Activated CD8-positive, alpha-beta T cell treated with anti-CD3 and anti-CD28 coated beads, Interleukin-2, amount 10 ng/mL, durations not matched to agents 7 days and 5 days (primary cell): ENCODE measurements at regions of chr1 and their contacts with region 1.

Region 1: GRCh38 chr1:12658531-12659453 is 14.9 kb downstream of the AADACL4 start:
- DNase-seq: peak; percentile 78
- ATAC-seq: peak; percentile 81
- H3K4me3 Mint-ChIP-seq: peak overlapping the region; percentile 47
- H3K27ac Mint-ChIP-seq: peak overlapping the region; percentile 0
- H3K4me1 Mint-ChIP-seq: peaks cover 12% of the 10 kb centered on the region
- H3K27me3 Mint-ChIP-seq: peaks cover 10% of the 10 kb centered on the region

Region 2: GRCh38 chr1:12314333-12314903 is 344.4 kb before region 1 on chr1:
- CTCF ChIA-PET with region 1: interaction called, 89 read pairs
- POLR2A ChIA-PET with region 1: interaction called, 3 read pairs
- DNase-seq: no peak
- ATAC-seq: no peak
- H3K4me3 Mint-ChIP-seq: no peak overlapping the region
- H3K27ac Mint-ChIP-seq: no peak overlapping the region
- H3K4me1 Mint-ChIP-seq: peaks cover 11% of the 10 kb centered on the region
- H3K27me3 Mint-ChIP-seq: no peaks in the 10 kb centered on the region

Region 3: GRCh38 chr1:12344596-12345349 is 314.0 kb before region 1 on chr1:
- CTCF ChIA-PET with region 1: interaction called, 10 read pairs
- POLR2A ChIA-PET with region 1: no interaction called
- DNase-seq: no peak
- ATAC-seq: peak; percentile 21
- H3K4me3 Mint-ChIP-seq: peak overlapping the region; percentile 61
- H3K27ac Mint-ChIP-seq: peak overlapping the region; percentile 91
- H3K4me1 Mint-ChIP-seq: peaks cover 60% of the 10 kb centered on the region
- H3K27me3 Mint-ChIP-seq: no peaks in the 10 kb centered on the region

Region 4: DNA sequence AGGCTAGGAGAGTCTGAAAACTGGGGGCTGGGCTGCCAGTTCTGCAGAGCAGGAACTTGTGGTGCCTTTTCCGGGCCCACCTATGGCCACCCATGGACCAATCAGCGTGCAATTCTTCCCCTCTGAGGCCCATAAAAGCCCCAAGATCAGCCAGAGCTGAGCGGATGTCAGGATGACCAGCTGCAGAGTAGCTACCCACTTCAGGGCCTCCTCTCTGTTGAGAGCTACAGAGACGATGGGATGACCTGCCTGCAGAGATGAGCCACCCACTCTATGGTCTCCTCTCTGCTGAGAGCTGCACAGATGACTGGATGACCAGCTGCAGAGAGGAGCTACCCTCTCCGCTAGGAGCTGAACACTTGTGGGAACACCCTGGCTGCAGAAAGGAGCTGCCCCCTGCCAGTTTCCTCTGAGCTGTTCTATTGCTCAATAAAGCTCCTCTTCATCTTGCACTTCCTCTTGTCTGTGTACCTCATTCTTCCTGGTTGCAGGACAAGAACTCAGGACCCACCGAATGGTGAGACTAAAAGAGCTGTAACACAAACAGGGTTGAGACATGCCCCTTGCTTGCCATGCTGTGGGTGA is 27.8 kb before region 1 on chr1:
- CTCF ChIA-PET with region 1: interaction called, 12 read pairs
- POLR2A ChIA-PET with region 1: interaction called, 3 read pairs
- DNase-seq: no peak
- ATAC-seq: no peak
- H3K4me3 Mint-ChIP-seq: no peak overlapping the region
- H3K27ac Mint-ChIP-seq: no peak overlapping the region
- H3K4me1 Mint-ChIP-seq: peaks cover 29% of the 10 kb centered on the region
- H3K27me3 Mint-ChIP-seq: peaks cover 5% of the 10 kb centered on the region

Region 5: GRCh38 chr1:12669529-12670068 is 10.8 kb after region 1 on chr1:
- CTCF ChIA-PET with region 1: interaction called, 17 read pairs
- POLR2A ChIA-PET with region 1: no interaction called
- DNase-seq: no peak
- ATAC-seq: no peak
- H3K4me3 Mint-ChIP-seq: no peak overlapping the region
- H3K27ac Mint-ChIP-seq: no peak overlapping the region
- H3K4me1 Mint-ChIP-seq: no peaks in the 10 kb centered on the region
- H3K27me3 Mint-ChIP-seq: peaks cover 26% of the 10 kb centered on the region